A549 (cell line): ENCODE measurements at regions of chr16 and their contacts with region 1.

Region 1: GRCh38 chr16:72938795-72939164 is 109.1 kb downstream of the ZFHX3 start:
- DNase-seq: peak; percentile 51 to 59
- ATAC-seq: peak; percentile 71 to 83
- H3K4me3 ChIP-seq: 0 out of 3 replicates have a peak overlapping the region, but pooled peaks have one; percentile 9
- H3K27ac ChIP-seq: peak overlapping the region; percentile 77 to 83
- H3K4me1 ChIP-seq: peaks cover 39% of the 10 kb centered on the region
- CTCF ChIP-seq: no peak
- EP300 ChIP-seq: no peak
- POLR2A ChIP-seq: no peak
- RAD21 ChIP-seq: no peak

Region 2: GRCh38 chr16:72927199-72928089 is 11.3 kb before region 1 on chr16:
- CTCF ChIA-PET with region 1: interaction called, 16 read pairs
- POLR2A ChIA-PET with region 1: no interaction called
- DNase-seq: peak; percentile 25 to 78
- ATAC-seq: peak; percentile 80
- H3K4me3 ChIP-seq: no peak overlapping the region
- H3K27ac ChIP-seq: peak overlapping the region; percentile 55 to 75
- H3K4me1 ChIP-seq: peaks cover 43% of the 10 kb centered on the region
- CTCF ChIP-seq: no peak
- EP300 ChIP-seq: peak; percentile 56 to 79; a peak in 3 of 5 replicates
- POLR2A ChIP-seq: no peak
- RAD21 ChIP-seq: peak in 1 of 2 experiments; percentile 29; a peak in 1 of 5 replicates

Region 3: GRCh38 chr16:72952811-72953595 is 14.2 kb after region 1 on chr16:
- CTCF ChIA-PET with region 1: interaction called, 13 read pairs
- POLR2A ChIA-PET with region 1: no interaction called
- DNase-seq: no peak
- ATAC-seq: no peak
- H3K4me3 ChIP-seq: no peak overlapping the region
- H3K27ac ChIP-seq: no peak overlapping the region
- H3K4me1 ChIP-seq: no peaks in the 10 kb centered on the region
- CTCF ChIP-seq: no peak
- EP300 ChIP-seq: no peak
- POLR2A ChIP-seq: no peak
- RAD21 ChIP-seq: no peak

Region 4: DNA sequence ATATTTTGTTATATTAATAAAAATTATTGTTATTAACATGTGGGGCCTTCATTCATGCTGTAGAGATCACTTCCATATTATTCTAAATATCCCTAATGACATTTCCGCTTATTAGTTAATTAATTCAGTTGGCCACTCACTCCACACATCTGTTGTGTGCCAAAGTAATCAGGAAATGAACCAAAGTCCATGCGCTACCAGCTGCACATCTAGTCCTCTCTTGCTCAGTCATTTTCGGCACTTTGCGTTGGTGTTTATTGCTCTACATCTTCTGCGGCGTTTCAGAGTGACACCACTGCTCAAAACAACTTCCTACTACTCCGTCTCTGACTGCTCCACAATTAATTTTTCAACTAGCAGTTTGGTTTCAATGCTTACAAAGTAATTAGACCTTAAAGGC is 210.6 kb after region 1 on chr16:
- CTCF ChIA-PET with region 1: no interaction called
- POLR2A ChIA-PET with region 1: no interaction called
- DNase-seq: no peak
- ATAC-seq: no peak
- H3K4me3 ChIP-seq: no peak overlapping the region
- H3K27ac ChIP-seq: no peak overlapping the region
- H3K4me1 ChIP-seq: no peaks in the 10 kb centered on the region
- CTCF ChIP-seq: no peak
- EP300 ChIP-seq: no peak
- POLR2A ChIP-seq: no peak
- RAD21 ChIP-seq: no peak